ENCODE measurements at regions of chr14 and their contacts with region 1.

Region 1: DNA sequence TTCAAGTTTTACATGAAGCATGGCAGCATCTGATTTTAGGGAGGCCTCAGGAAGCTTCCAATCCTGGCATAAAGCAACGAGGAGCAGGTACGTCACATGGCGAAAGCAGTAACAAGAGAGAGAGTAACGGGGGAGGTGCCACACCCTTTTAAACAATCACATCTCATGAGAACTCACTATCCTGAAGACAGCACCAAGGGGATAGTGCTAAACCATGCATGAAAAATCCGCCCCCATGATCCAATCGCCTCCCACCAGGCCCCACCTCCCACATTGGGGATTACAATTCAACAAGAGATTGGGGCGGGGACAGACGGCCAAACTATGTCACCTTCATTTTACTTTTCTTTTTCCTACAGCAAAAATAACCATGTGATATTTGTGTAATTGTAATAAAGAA is 7.2 kb upstream of the MAP3K9 start:
- DNase-seq: no peak
- H3K4me3 ChIP-seq: no peak overlapping the region
- H3K27ac ChIP-seq: no peak overlapping the region
- H3K4me1 ChIP-seq: peaks cover 6% of the 10 kb centered on the region
- H3K27me3 ChIP-seq: peaks cover 7% of the 10 kb centered on the region
- CTCF ChIP-seq: no peak

Region 2: GRCh38 chr14:70622111-70622712 is 194.3 kb before region 1 on chr14:
- intact Hi-C with region 1: loop called (anchors 5 kb)
- DNase-seq: peak; percentile 52
- H3K4me3 ChIP-seq: no peak overlapping the region
- H3K27ac ChIP-seq: no peak overlapping the region
- H3K4me1 ChIP-seq: no peaks in the 10 kb centered on the region
- H3K27me3 ChIP-seq: no peaks in the 10 kb centered on the region
- CTCF ChIP-seq: peak; percentile 61

Region 3: GRCh38 chr14:70714055-70714621 is 102.4 kb before region 1 on chr14:
- intact Hi-C with region 1: loop called (anchors 5 kb)
- DNase-seq: peak; percentile 54
- H3K4me3 ChIP-seq: no peak overlapping the region
- H3K27ac ChIP-seq: no peak overlapping the region
- H3K4me1 ChIP-seq: no peaks in the 10 kb centered on the region
- H3K27me3 ChIP-seq: no peaks in the 10 kb centered on the region
- CTCF ChIP-seq: peak; percentile 59